ENCODE measurements at regions of chr16 and their contacts with region 1.

Region 1: GRCh38 chr16:14300705-14301168 is 229.6 kb downstream of the MRTFB start:
- DNase-seq: peak; percentile 86
- H3K4me3 ChIP-seq: peak overlapping the region; percentile 70
- H3K27ac ChIP-seq: peak overlapping the region; percentile 20
- H3K4me1 ChIP-seq: peaks cover 35% of the 10 kb centered on the region
- CTCF ChIP-seq: peak; percentile 81

Region 2: DNA sequence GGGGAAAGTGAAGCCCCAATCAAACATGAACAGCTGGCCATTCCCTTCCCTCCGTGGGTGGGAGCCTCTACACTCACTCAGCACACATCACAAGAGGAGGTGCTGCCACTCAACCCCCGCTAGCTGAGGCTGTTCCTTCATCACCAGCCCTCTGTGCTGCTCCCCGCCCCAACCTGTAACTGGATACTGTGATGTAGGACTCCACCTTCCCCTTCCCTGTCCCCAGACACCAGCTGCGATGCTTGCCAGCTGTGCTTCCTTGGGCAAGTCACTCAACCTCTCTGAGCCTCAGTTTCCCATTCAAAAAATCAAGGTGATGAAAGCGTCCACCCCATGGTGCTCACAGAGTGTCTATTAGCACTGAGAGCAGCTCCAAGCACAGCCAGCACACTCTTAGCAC is 43.6 kb after region 1 on chr16:
- CTCF ChIA-PET with region 1: no interaction called
- POLR2A ChIA-PET with region 1: no interaction called
- intact Hi-C with region 1: no loop called
- DNase-seq: no peak
- H3K4me3 ChIP-seq: no peak overlapping the region
- H3K27ac ChIP-seq: no peak overlapping the region
- H3K4me1 ChIP-seq: peaks cover 8% of the 10 kb centered on the region
- CTCF ChIP-seq: no peak

Region 3: DNA sequence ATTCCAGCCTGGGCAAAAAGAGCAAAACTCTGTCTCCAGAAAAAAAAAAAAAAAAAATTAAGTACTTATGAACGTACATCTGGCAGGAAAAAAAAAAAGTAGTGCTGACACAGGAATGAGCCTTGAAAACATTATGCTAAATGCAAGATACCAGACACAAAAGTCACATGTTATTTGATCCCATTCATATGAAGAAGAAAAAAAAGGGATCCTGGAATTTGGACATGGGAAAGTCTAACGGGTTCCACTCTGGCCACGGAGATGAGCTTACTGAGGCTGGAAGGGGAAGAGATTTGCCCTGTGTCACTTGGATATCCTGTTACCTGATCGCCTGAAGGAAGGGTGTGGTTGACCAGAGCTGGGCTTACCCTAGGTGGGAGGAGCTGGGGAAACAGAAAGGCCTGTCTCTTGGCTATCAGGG is 77.4 kb after region 1 on chr16:
- CTCF ChIA-PET with region 1: interaction called, 4 read pairs
- POLR2A ChIA-PET with region 1: interaction called, 7 read pairs
- intact Hi-C with region 1: loop called (anchors 1 kb)
- DNase-seq: no peak
- H3K4me3 ChIP-seq: no peak overlapping the region
- H3K27ac ChIP-seq: no peak overlapping the region
- H3K4me1 ChIP-seq: peaks cover 39% of the 10 kb centered on the region
- CTCF ChIP-seq: no peak

Region 4: GRCh38 chr16:14427371-14427948 is 126.7 kb after region 1 on chr16:
- CTCF ChIA-PET with region 1: no interaction called
- POLR2A ChIA-PET with region 1: no interaction called
- intact Hi-C with region 1: no loop called
- DNase-seq: no peak
- H3K4me3 ChIP-seq: no peak overlapping the region
- H3K27ac ChIP-seq: no peak overlapping the region
- H3K4me1 ChIP-seq: no peaks in the 10 kb centered on the region
- CTCF ChIP-seq: no peak

Region 5: GRCh38 chr16:14529010-14529669 is 228.4 kb after region 1 on chr16:
- CTCF ChIA-PET with region 1: interaction called, 3 read pairs
- POLR2A ChIA-PET with region 1: interaction called, 4 read pairs
- intact Hi-C with region 1: loop called (anchors 1 kb)
- DNase-seq: peak; percentile 78
- H3K4me3 ChIP-seq: no peak overlapping the region
- H3K27ac ChIP-seq: no peak overlapping the region
- H3K4me1 ChIP-seq: peaks cover 22% of the 10 kb centered on the region
- CTCF ChIP-seq: peak; percentile 93

Region 6: GRCh38 chr16:14600164-14600563 is 299.4 kb after region 1 on chr16:
- CTCF ChIA-PET with region 1: no interaction called
- POLR2A ChIA-PET with region 1: no interaction called
- intact Hi-C with region 1: loop called (anchors 2 kb)
- DNase-seq: peak; percentile 47
- H3K4me3 ChIP-seq: no peak overlapping the region
- H3K27ac ChIP-seq: peak overlapping the region; percentile 19
- H3K4me1 ChIP-seq: peaks cover 17% of the 10 kb centered on the region
- CTCF ChIP-seq: peak; percentile 79

Region 7: DNA sequence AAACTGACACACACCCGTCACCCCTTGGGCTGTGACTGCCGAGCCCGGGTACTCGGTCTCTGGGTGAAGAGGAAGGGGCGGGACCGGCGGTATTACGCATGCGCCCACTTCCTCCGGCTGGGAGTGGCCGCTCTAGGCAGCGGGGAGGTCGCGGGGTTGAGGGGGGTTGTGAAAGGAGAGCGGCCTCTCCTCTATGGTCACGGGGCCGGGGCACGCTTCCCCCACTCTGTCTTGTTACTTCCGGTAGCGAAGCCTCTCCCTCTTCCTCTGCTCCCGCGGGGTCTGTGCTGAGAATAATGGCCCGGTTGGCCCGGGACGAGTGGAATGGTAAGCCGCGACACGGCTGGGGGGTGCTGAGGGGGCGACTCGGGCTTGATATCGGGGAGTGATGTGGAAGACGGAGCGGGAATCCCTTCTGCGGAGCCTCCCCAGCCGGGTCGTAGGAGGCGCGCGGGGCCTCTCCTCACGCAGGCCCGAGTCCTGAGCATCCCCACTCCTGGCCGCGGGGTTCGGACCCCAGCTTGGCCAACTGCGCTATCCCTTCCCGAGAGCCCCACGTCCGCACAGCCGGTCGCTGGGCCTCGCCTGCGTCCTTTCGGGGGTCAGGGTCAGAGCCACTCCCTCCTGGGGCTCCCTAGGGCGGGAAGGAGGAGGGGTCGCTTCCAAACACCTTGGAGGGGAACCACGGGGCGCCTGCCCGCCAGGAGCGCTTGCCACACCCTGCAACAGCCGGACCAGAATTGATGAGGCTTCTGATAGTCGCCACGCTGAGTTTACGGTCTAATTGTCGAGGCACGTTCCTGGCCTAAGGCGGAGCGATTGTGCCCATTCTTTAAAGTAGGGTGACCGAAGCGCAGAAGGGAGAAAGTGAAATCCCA is 332.2 kb after region 1 on chr16 and contains the start of gene BFAR:
- CTCF ChIA-PET with region 1: no interaction called
- POLR2A ChIA-PET with region 1: no interaction called
- intact Hi-C with region 1: loop called (anchors 2 kb)
- DNase-seq: peak; percentile 98
- H3K4me3 ChIP-seq: peak within 1 kb of the TSS; percentile 98
- H3K27ac ChIP-seq: peak within 1 kb of the TSS; percentile 79
- H3K4me1 ChIP-seq: peaks cover 40% of the 10 kb centered on the region
- CTCF ChIP-seq: no peak
- total RNA-seq, gene BFAR: 34.4 and 36.7 TPM in 2 replicates